A549 (cell line): ENCODE measurements at regions of chr14 and their contacts with region 1.

Region 1: DNA sequence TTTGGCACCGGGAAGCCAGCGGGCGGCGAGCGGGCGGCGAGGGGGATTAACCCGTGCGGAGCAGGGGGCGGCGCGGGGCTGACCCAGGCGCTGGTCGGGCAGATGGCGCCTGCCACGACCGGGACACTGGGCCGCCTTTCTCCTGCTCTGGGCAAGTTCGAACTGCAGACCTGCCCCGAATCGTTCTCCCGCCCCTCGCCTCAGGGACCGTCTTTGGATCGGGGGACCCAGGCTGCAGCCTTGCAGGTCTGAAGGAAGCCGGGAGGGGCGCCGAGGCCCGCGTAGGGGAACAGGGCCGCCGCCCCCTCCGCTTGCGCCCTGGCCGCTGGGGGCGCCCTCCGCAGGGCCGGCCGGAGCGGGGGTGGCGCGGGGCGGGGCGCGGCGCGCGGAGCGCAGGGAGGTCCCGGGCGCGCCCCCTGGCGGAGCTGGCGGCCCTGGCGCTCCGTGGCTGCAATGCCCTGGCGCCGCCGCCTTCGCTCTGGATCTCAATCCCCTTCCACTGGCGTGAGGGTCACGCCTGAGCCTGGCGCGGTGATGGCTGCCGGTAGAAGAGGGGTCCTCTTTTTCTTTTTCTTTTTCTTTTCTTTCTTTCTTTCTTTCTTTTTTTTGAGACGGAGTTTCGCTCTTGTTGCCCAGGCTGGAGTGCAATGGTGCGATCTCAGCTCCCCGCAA is 449 bp upstream of the LTBP2 start:
- DNase-seq: peak; percentile 55 to 78
- ATAC-seq: peak; percentile 75 to 84
- H3K4me3 ChIP-seq: peak overlapping the region; percentile 66
- H3K27ac ChIP-seq: peak overlapping the region; percentile 89 to 91
- H3K4me1 ChIP-seq: peaks cover 54% of the 10 kb centered on the region
- CTCF ChIP-seq: peak; percentile 100
- EP300 ChIP-seq: peak in 1 of 2 experiments; percentile 35; a peak in 1 of 5 replicates
- POLR2A ChIP-seq: no peak
- RAD21 ChIP-seq: peak; percentile 34 to 76; a peak in 3 of 5 replicates

Region 2: GRCh38 chr14:74459289-74459946 is 153.1 kb before region 1 on chr14:
- CTCF ChIA-PET with region 1: no interaction called
- POLR2A ChIA-PET with region 1: no interaction called
- DNase-seq: peak; percentile 48 to 51
- ATAC-seq: peak; percentile 96 to 98
- H3K4me3 ChIP-seq: no peak overlapping the region
- H3K27ac ChIP-seq: no peak overlapping the region
- H3K4me1 ChIP-seq: no peaks in the 10 kb centered on the region
- CTCF ChIP-seq: peak; percentile 33; the same call in 2 of the 3 replicates
- EP300 ChIP-seq: no peak
- POLR2A ChIP-seq: no peak
- RAD21 ChIP-seq: peak; percentile 23 to 26; a peak in 1 of 5 replicates

Region 3: DNA sequence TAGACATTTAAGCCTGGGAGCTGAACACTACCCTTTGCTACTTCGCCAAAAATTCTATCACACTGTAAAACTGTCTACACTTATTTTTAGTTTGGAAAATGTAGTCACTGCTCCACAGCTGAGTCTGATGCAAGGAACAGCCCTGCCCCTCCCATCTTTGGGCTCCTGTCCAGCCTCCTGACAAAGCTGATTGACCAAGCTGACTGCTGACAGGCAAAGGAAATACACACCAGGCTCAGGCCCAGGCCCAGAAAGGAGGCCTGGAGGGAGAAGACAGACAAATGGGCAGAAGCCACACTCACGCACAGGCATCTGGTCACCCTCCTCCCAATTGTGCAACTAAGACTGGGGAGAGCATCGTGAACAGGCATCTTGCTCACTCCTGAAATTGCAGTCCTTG is 63.6 kb before region 1 on chr14:
- CTCF ChIA-PET with region 1: interaction called, 16 read pairs
- POLR2A ChIA-PET with region 1: no interaction called
- DNase-seq: no peak
- ATAC-seq: no peak
- H3K4me3 ChIP-seq: no peak overlapping the region
- H3K27ac ChIP-seq: peak overlapping the region in 1 of 2 experiments; percentile 70; a peak in 1 of 6 replicates
- H3K4me1 ChIP-seq: peaks cover 6% of the 10 kb centered on the region; the same call in 2 of the 3 replicates
- CTCF ChIP-seq: no peak
- EP300 ChIP-seq: no peak
- POLR2A ChIP-seq: no peak
- RAD21 ChIP-seq: no peak

Region 4: DNA sequence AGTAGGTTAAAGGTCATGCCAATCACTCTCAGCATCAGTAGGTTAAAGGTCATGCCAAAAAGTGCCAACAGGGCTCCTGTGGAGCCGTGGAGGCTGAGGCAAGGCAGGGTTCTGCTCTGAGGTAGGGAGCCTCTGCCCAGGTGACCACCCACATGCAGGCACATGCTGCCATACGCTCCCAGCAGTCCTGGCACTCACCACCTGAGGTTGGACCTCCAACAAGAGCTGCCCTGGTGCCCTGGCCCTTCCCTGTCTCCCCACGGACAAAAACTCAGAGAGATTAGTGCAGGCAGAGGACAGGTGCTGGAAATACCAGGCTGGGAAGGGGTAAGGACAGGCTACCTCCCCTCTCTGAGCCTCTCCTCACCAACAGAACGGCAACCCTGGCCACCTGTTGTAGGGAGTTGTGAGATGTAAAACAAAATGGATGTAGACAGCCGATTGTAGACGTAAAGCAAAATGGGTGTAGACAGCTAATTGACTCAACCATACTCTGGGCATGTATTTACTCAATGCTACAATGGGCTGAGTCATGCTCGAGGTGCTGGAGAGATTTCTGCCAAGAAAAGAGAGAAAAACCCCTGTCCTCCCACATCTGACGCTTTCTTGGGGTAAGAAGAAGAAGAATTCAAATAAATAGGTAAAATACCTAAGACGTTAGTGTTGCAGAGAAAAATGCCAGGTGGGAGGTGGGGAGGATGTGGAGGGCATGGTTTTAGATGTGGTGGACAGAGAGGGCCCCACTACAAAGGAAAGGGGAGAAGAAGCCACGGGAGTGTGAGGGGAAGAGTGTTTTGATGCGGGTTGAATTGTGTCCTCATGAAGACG is 32.8 kb before region 1 on chr14:
- CTCF ChIA-PET with region 1: interaction called, 120 read pairs
- POLR2A ChIA-PET with region 1: interaction called, 7 read pairs
- DNase-seq: peak; percentile 89 to 94
- ATAC-seq: peak; percentile 63 to 79
- H3K4me3 ChIP-seq: no peak overlapping the region
- H3K27ac ChIP-seq: peak overlapping the region; percentile 83 to 95
- H3K4me1 ChIP-seq: peaks cover 81% of the 10 kb centered on the region
- CTCF ChIP-seq: no peak
- EP300 ChIP-seq: peak; percentile 58 to 83; a peak in 3 of 5 replicates
- POLR2A ChIP-seq: no peak
- RAD21 ChIP-seq: no peak; a peak in 1 of 5 replicates

Region 5: DNA sequence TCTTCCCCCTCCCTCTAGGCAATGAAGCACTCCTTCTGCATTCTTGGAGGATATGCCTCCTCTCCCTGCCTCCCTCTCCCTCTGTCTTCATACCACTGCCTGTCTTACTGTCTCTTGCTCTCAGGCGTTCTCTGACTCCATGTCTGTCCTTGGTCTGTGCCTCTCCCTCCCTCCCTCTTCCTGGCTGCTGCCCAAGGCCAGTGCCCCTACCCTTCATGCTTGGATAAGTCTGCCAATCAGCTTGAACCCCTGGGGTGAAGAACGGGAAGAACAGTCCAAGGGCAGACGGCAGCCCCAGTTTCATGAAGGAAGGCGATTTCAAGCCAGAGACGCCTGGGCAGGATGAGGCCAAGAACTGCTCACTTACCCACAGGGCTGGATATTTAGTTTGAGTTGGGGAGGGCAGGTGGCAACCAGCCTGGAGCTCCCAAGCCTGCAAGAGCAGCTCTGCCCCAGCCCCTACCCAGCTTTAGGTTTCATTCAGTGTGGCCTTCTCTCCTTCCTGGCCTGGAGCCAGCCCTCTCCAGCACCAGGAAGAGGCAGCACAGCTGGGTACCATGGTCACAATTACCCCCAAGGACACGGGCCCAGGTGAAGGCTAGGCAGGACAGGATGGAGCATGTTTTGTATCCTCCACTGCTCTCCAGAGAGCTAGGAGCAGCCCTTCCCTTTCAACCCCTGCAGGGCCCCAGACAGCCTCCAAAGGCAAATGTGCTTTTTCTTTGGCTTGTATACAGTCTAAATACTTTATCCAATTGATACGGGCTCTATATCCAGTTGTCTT is 35.4 kb after region 1 on chr14:
- CTCF ChIA-PET with region 1: interaction called, 228 read pairs
- POLR2A ChIA-PET with region 1: no interaction called
- DNase-seq: no peak
- ATAC-seq: peak in 1 of 2 experiments; percentile 27; a peak in 5 of 6 replicates
- H3K4me3 ChIP-seq: no peak overlapping the region
- H3K27ac ChIP-seq: peak overlapping the region in 1 of 2 experiments; percentile 49; a peak in 3 of 6 replicates
- H3K4me1 ChIP-seq: peaks cover 25% of the 10 kb centered on the region
- CTCF ChIP-seq: no peak
- EP300 ChIP-seq: no peak
- POLR2A ChIP-seq: no peak
- RAD21 ChIP-seq: no peak

Region 6: DNA sequence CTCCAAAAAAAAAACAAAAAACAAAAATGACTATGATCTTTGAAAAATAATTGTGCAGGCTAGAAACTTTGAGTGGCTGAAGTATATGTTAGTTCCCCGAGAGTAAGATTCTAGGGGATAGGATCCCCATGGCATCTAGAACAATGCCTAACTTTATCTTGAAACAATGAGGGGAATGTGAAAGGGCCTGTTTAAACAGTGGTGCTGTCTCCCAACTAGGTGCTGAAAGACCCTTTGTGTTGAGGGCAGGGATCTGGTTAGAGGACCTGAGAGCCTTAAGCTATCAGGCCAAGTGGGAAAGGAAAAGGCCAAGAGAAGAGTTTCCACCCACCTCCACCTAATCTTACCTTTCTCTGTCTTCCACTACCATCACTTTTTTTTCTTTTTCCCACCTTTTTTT is 143.8 kb after region 1 on chr14:
- CTCF ChIA-PET with region 1: interaction called, 11 read pairs
- POLR2A ChIA-PET with region 1: no interaction called
- DNase-seq: no peak
- ATAC-seq: no peak
- H3K4me3 ChIP-seq: no peak overlapping the region
- H3K27ac ChIP-seq: no peak overlapping the region
- H3K4me1 ChIP-seq: no peaks in the 10 kb centered on the region
- CTCF ChIP-seq: no peak
- EP300 ChIP-seq: no peak
- POLR2A ChIP-seq: no peak
- RAD21 ChIP-seq: no peak